CD8-positive, alpha-beta T cell (primary cell): ENCODE measurements at regions of chr5 and their contacts with region 1.

Region 1: DNA sequence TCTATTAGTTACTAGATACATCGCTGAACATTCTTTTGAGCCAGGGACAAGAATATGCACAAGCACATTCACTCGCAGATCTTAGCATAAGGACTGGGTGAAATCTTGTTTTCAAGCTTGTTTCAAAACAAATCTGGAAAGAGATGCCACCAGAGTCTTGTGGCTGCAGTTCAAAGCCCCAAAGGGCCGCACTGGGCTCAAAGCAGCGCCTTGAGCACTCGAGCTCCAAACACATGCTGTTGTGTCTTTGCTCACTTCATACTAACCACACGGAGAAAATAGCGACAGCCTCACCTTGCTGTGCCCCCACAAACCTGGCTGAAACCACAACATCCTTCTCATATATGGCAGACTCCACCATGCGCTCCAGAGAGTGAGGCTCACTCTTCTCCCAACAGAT is 34.2 kb upstream of the IL7R start:
- DNase-seq: peak; percentile 22 to 84 (median 63)
- ATAC-seq: peak; percentile 74
- H3K4me3 ChIP-seq: no peak overlapping the region
- H3K4me3 Mint-ChIP-seq: peak overlapping the region; percentile 58
- H3K27ac ChIP-seq: peak overlapping the region; percentile 12 to 34
- H3K27ac Mint-ChIP-seq: peak overlapping the region; percentile 94
- H3K4me1 ChIP-seq: peaks cover 93% of the 10 kb centered on the region
- H3K4me1 Mint-ChIP-seq: peaks cover 90% of the 10 kb centered on the region
- H3K27me3 ChIP-seq: no peaks in the 10 kb centered on the region
- H3K27me3 Mint-ChIP-seq: no peaks in the 10 kb centered on the region
- CTCF ChIP-seq: no peak

Region 2: DNA sequence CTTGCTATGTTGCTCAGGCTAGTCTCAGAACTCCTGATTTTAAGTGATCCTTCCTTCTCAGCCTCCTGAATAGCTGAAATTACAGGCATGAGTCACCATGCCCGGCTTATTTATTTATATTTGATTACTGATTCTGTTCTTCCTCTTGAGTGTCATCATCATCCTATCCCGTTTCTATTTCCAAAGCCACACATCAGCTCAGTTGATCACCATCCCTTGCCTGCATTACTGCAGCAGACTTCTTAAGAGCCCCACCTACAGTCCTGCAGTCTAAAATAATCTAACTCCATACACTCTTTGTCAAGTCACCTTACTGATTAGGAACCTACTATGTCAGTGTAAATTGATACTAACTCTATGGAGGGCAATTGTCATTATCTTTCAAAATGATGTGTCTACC is 1305.3 kb before region 1 on chr5:
- CTCF ChIA-PET with region 1: no interaction called
- POLR2A ChIA-PET with region 1: no interaction called
- intact Hi-C with region 1: no loop called
- DNase-seq: no peak
- ATAC-seq: no peak
- H3K4me3 ChIP-seq: no peak overlapping the region
- H3K4me3 Mint-ChIP-seq: no peak overlapping the region
- H3K27ac ChIP-seq: no peak overlapping the region
- H3K27ac Mint-ChIP-seq: no peak overlapping the region
- H3K4me1 ChIP-seq: no peaks in the 10 kb centered on the region
- H3K4me1 Mint-ChIP-seq: no peaks in the 10 kb centered on the region
- H3K27me3 ChIP-seq: no peaks in the 10 kb centered on the region
- H3K27me3 Mint-ChIP-seq: peaks cover 10% of the 10 kb centered on the region
- CTCF ChIP-seq: no peak

Region 3: DNA sequence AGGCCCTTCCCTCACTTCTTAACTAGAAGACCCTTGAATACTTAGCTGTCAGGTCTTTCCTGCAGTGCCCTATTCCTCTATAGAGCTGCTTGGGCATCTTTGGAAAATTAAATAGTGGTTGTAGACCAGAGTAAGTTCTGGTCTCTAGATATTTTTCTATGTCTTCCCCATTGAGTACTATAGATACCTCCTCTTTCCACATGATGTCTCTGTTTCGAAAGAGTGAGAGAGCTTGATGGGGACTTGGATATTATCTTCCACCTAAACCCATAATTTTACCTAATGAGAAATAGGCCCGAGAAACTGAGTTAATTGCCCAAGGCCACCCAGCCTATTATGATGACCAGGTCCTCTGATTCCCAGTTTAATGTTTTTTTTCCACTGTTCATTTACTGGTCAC is 164.6 kb before region 1 on chr5:
- CTCF ChIA-PET with region 1: interaction called, 12 read pairs
- POLR2A ChIA-PET with region 1: interaction called, 4 read pairs
- intact Hi-C with region 1: no loop called
- DNase-seq: peak in 2 of 9 experiments; percentile 22 to 35
- ATAC-seq: peak; percentile 55
- H3K4me3 ChIP-seq: no peak overlapping the region
- H3K4me3 Mint-ChIP-seq: no peak overlapping the region
- H3K27ac ChIP-seq: no peak overlapping the region
- H3K27ac Mint-ChIP-seq: peak overlapping the region; percentile 29
- H3K4me1 ChIP-seq: no peaks in the 10 kb centered on the region
- H3K4me1 Mint-ChIP-seq: peaks cover 20% of the 10 kb centered on the region
- H3K27me3 ChIP-seq: no peaks in the 10 kb centered on the region
- H3K27me3 Mint-ChIP-seq: no peaks in the 10 kb centered on the region
- CTCF ChIP-seq: no peak

Region 4: DNA sequence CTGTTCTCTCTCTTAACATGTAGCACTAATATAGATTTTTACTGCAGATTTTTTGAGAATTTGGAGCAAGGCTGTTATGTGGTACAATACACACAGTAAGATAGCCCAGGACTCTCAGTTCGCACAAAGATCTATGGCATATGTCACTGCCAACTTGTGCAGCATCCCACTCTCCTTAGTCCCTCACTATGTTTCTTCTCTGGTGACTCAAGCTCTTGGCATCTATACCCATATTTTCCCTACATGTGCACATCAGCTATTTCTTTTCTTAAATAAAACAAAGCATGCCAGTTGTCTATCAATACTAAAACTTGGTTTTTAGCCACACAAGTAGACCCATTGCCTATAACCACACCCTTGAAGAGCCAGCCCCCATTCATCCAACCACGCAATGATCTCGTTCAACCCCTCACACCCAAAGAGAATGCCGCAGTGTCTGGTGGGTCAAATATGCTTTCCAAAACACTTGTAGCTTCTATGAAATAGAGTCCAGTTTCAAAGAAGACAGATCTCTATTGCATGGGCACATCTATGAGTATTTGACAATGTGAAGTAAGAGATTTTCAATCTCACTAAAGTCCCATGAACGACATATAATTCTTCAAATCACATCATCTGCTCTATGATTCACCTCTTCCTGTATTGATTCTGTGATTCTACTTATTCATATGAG is 16.0 kb after region 1 on chr5:
- CTCF ChIA-PET with region 1: interaction called, 21 read pairs
- POLR2A ChIA-PET with region 1: interaction called, 30 read pairs
- intact Hi-C with region 1: loop called (anchors 1 to 2 kb)
- DNase-seq: no peak
- ATAC-seq: no peak
- H3K4me3 ChIP-seq: no peak overlapping the region
- H3K4me3 Mint-ChIP-seq: no peak overlapping the region
- H3K27ac ChIP-seq: no peak overlapping the region
- H3K27ac Mint-ChIP-seq: peak overlapping the region; percentile 77
- H3K4me1 ChIP-seq: peaks cover 59% of the 10 kb centered on the region
- H3K4me1 Mint-ChIP-seq: peaks cover 68% of the 10 kb centered on the region
- H3K27me3 ChIP-seq: no peaks in the 10 kb centered on the region
- H3K27me3 Mint-ChIP-seq: no peaks in the 10 kb centered on the region
- CTCF ChIP-seq: no peak

Region 5: GRCh38 chr5:35869685-35870277 is 47.3 kb after region 1 on chr5:
- CTCF ChIA-PET with region 1: no interaction called
- POLR2A ChIA-PET with region 1: interaction called, 700 read pairs
- intact Hi-C with region 1: no loop called
- DNase-seq: no peak
- ATAC-seq: peak; percentile 30
- H3K4me3 ChIP-seq: no peak overlapping the region
- H3K4me3 Mint-ChIP-seq: no peak overlapping the region
- H3K27ac ChIP-seq: peak overlapping the region in 1 of 2 experiments; percentile 17
- H3K27ac Mint-ChIP-seq: peak overlapping the region; percentile 85
- H3K4me1 ChIP-seq: peaks cover 61% of the 10 kb centered on the region
- H3K4me1 Mint-ChIP-seq: peaks cover 87% of the 10 kb centered on the region
- H3K27me3 ChIP-seq: no peaks in the 10 kb centered on the region
- H3K27me3 Mint-ChIP-seq: no peaks in the 10 kb centered on the region
- CTCF ChIP-seq: no peak

Region 6: DNA sequence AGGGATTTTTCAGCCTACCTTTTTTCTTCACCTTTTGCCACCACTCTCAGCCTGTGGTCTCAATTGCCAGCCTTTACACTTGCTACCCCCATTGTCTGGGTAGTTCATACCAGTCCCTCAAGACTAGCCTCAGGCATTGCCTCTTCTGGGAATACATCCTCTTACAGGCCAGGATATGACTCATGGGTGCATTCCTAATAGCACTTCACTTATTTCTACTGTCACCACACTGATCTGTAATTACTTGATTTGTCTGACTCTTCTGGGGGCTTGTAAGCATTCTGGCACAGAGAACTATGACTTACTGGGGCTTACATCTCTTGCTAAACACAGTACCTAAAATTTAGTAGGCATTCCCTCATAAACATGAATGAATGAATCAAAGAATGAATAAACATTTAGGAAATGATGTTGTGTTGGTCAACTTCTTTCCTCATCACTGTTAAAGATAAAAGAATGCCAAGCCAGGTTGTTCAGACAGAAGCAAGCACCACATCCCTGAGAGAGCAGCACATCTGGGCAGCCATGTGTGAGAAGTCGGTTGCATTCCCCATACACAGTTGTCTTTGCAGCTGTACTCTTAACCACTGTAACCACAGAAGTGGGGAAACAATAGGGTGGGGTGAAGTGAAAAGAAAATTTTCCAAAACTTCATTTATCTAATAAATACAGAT is 61.7 kb after region 1 on chr5:
- CTCF ChIA-PET with region 1: interaction called, 5 read pairs
- POLR2A ChIA-PET with region 1: interaction called, 48 read pairs
- intact Hi-C with region 1: no loop called
- DNase-seq: peak in 2 of 9 experiments; percentile 35 to 57
- ATAC-seq: peak; percentile 47
- H3K4me3 ChIP-seq: no peak overlapping the region
- H3K4me3 Mint-ChIP-seq: peak overlapping the region; percentile 3
- H3K27ac ChIP-seq: peak overlapping the region in 1 of 2 experiments; percentile 44
- H3K27ac Mint-ChIP-seq: peak overlapping the region; percentile 89
- H3K4me1 ChIP-seq: peaks cover 26% of the 10 kb centered on the region
- H3K4me1 Mint-ChIP-seq: peaks cover 47% of the 10 kb centered on the region
- H3K27me3 ChIP-seq: no peaks in the 10 kb centered on the region
- H3K27me3 Mint-ChIP-seq: no peaks in the 10 kb centered on the region
- CTCF ChIP-seq: no peak

Region 7: DNA sequence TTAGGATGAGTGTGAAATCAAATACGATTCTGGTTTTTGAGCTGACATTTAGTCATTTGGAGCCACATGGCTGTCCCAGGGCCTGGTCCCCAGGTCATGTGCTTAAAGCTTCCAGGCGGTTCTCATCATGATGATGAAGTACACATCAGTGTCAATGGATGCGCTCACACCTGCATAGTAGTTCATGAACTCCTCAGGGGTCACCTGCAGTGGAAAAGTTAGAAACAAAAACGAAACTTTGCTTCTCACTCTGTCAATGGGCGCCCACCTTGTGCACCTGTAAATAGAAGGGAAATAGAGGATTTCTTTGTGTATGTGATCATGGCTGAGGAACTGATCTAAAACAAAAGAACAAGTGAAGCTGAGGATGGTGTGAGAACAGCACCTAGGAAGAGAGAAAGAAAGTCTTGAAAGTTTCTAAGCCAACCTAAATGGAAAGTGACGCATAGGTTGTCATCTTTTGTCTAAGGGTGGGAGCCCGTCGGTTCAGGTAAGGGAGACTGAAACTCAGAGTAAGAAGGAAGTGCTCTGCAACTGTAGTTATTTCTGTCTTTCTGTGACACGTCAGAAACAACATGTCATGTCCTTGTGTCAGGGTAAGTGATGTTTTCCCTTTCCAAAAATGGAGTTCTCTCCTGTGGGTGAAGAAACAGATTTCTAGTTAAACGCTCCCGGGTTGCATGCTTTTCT is 82.1 kb after region 1 on chr5:
- CTCF ChIA-PET with region 1: no interaction called
- POLR2A ChIA-PET with region 1: no interaction called
- intact Hi-C with region 1: no loop called
- DNase-seq: peak in 2 of 9 experiments; percentile 32 to 35
- ATAC-seq: peak; percentile 70
- H3K4me3 ChIP-seq: no peak overlapping the region
- H3K4me3 Mint-ChIP-seq: peak overlapping the region; percentile 54
- H3K27ac ChIP-seq: no peak overlapping the region
- H3K27ac Mint-ChIP-seq: peak overlapping the region; percentile 86
- H3K4me1 ChIP-seq: peaks cover 39% of the 10 kb centered on the region
- H3K4me1 Mint-ChIP-seq: peaks cover 62% of the 10 kb centered on the region
- H3K27me3 ChIP-seq: no peaks in the 10 kb centered on the region
- H3K27me3 Mint-ChIP-seq: no peaks in the 10 kb centered on the region
- CTCF ChIP-seq: no peak